ENCODE measurements at regions of chr20 and their contacts with region 1.

Region 1: DNA sequence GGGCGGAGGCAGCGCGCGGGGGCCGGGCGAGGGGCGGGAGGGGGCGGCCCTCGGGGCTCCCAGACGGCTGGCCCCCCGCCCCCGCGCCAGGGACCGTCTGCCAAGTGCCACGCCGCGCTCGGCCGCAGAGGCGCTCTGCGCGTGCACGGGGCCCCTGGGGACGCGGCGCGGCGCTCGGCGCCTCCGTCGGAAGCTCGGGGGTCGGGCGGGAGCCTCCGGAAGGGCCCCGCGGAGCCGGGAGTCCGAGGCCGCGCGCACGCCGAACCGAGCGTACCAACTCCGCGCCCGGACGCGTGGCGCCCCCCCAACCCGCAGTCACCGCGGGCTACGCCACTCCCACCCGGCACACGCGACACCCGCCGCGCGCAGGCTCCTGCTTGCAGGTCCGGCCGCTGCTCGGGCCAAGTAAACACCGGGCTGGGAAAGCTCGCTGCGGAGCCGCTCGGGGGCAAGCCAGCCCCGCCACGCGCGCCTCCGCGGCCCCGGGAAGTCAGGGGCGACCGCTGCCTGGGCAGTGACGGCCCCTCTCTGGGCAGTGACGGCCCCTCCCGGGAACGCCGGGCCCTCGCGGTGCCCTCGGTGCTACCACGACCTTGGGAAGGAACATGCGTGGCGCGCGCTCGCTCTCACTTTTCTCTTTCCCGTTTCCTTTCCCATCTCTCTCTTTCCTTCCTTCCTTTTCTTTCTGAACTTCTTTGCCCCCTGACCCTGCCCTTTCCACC is 384 bp upstream of the PREX1 start:
- DNase-seq: peak; percentile 81
- H3K4me3 ChIP-seq: peak overlapping the region; percentile 14 to 92 (median 26)
- H3K27ac ChIP-seq: peak overlapping the region; percentile 47
- H3K4me1 ChIP-seq: peaks cover 45% of the 10 kb centered on the region
- H3K27me3 ChIP-seq: no peaks in the 10 kb centered on the region
- CTCF ChIP-seq: no peak
- POLR2A ChIP-seq: peak; percentile 83

Region 2: DNA sequence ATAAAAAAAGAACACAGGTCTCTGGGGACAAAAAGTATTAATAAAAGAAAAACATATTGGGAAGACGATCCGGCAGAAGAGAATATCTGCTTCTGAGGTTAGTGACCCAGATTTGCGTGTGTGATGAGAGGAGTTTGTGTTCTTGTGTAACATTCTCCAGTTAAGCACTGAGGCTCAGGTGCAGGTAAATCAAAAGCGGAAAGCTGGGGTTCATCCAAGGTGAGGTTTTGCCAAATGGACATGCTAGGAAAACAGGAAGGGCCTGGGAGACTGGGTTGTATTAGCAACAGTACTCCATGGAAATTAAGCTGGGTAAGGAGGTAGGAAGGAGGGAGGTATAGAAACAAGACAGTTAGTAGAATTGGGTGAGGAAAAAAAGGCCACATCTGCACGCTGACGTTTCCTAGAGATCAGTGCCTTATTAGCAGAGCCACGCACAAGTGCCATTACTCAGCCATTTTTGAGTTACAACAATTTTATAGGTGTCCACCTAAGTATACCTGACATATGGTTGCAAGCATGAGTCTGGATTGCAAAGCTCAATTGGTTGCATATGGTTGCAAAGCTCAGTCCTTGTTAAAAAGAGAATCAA is 1611.3 kb before region 1 on chr20:
- CTCF ChIA-PET with region 1: no interaction called
- POLR2A ChIA-PET with region 1: no interaction called
- dilution Hi-C with region 1: no loop called
- intact Hi-C with region 1: no loop called
- DNase-seq: no peak
- H3K4me3 ChIP-seq: no peak overlapping the region
- H3K27ac ChIP-seq: no peak overlapping the region
- H3K4me1 ChIP-seq: no peaks in the 10 kb centered on the region
- H3K27me3 ChIP-seq: no peaks in the 10 kb centered on the region
- CTCF ChIP-seq: no peak
- POLR2A ChIP-seq: no peak

Region 3: GRCh38 chr20:48682529-48683251 is 145.5 kb before region 1 on chr20:
- CTCF ChIA-PET with region 1: no interaction called
- POLR2A ChIA-PET with region 1: no interaction called
- dilution Hi-C with region 1: no loop called
- intact Hi-C with region 1: loop called (anchors 5 kb)
- DNase-seq: peak; percentile 89
- H3K4me3 ChIP-seq: no peak overlapping the region
- H3K27ac ChIP-seq: peak overlapping the region; percentile 48
- H3K4me1 ChIP-seq: peaks cover 56% of the 10 kb centered on the region
- H3K27me3 ChIP-seq: no peaks in the 10 kb centered on the region
- CTCF ChIP-seq: no peak
- POLR2A ChIP-seq: no peak

Region 4: GRCh38 chr20:48750947-48751635 is 77.1 kb before region 1 on chr20:
- CTCF ChIA-PET with region 1: interaction called, 3 read pairs
- POLR2A ChIA-PET with region 1: interaction called, 3 read pairs
- dilution Hi-C with region 1: no loop called
- intact Hi-C with region 1: loop called (anchors 2 kb)
- DNase-seq: peak; percentile 84
- H3K4me3 ChIP-seq: no peak overlapping the region
- H3K27ac ChIP-seq: peak overlapping the region; percentile 83
- H3K4me1 ChIP-seq: peaks cover 19% of the 10 kb centered on the region
- H3K27me3 ChIP-seq: no peaks in the 10 kb centered on the region
- CTCF ChIP-seq: no peak
- POLR2A ChIP-seq: no peak

Region 5: DNA sequence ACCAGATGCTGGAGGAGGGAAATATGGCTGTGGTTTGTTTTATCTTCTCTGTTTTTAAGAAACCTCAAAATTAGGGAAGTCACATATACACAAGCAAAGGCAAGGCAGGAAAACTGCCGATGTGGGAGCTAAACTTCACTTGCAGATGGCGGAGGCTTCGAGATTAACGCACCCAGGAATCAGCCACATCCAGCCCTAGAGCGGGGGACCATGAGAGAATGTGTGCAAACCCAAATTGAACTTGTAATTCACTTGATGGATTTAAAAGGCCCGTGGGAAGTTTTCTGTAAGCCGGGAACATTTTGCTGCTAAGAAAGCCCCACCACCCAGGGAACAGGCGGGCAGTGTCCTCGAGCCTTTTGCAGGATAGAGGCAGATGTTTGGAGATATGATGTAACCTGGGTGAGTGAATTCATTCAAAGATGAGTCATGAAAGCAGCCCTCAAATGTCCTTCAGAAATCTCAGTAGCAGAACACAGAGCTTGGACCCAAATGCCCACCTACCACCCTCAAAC is 40.3 kb before region 1 on chr20:
- CTCF ChIA-PET with region 1: no interaction called
- POLR2A ChIA-PET with region 1: no interaction called
- dilution Hi-C with region 1: no loop called
- intact Hi-C with region 1: no loop called
- DNase-seq: no peak
- H3K4me3 ChIP-seq: no peak overlapping the region
- H3K27ac ChIP-seq: no peak overlapping the region
- H3K4me1 ChIP-seq: peaks cover 18% of the 10 kb centered on the region
- H3K27me3 ChIP-seq: no peaks in the 10 kb centered on the region
- CTCF ChIP-seq: no peak
- POLR2A ChIP-seq: no peak

Region 6: DNA sequence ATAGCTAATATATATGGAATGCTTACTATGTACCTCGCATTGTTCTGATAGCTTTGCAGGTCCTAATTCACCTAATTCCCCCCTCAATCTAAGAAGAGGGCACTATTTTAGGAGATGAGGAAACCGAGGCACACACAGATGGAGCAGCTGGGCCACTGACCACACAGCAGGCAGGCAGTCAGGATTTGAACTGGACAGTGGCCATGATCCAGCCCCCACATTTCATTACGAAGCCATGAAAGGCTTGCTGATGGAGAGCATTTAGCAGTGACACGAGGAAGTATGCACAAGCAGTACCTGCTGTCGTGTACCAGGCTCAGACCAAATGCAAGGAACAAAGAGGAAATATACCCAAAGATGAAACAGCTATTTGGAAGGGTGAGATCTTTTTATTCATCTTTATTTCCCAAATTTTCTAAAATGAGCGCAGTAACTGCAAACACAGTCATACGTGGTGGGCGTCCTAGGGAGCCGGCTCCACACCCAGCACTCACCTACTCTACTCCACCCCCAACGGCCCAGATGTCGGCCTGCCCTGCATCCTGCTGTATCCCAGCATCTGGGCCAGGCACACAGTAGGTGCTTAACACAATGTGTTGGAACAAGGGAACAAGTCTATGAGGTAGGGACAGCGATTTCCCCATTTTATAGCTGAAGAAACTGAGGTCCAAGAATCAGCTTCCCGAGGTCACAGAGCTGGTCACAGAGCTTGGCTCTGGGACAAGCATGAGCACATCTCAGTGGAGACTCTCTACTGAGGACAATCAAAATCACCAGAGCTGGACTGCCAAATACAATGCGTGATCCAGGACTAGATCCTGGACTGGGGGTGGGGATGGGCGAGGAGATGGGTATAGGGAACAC is 15.4 kb before region 1 on chr20:
- CTCF ChIA-PET with region 1: no interaction called
- POLR2A ChIA-PET with region 1: no interaction called
- dilution Hi-C with region 1: no loop called
- intact Hi-C with region 1: no loop called
- DNase-seq: no peak
- H3K4me3 ChIP-seq: no peak overlapping the region
- H3K27ac ChIP-seq: no peak overlapping the region
- H3K4me1 ChIP-seq: peaks cover 16% of the 10 kb centered on the region
- H3K27me3 ChIP-seq: no peaks in the 10 kb centered on the region
- CTCF ChIP-seq: no peak
- POLR2A ChIP-seq: no peak

Region 7: GRCh38 chr20:48846498-48847485 is 18.6 kb after region 1 on chr20:
- CTCF ChIA-PET with region 1: interaction called, 12 read pairs
- POLR2A ChIA-PET with region 1: interaction called, 5 read pairs
- dilution Hi-C with region 1: no loop called
- intact Hi-C with region 1: loop called (anchors 1 kb)
- DNase-seq: peak; percentile 62
- H3K4me3 ChIP-seq: no peak overlapping the region
- H3K27ac ChIP-seq: peak overlapping the region; percentile 51
- H3K4me1 ChIP-seq: peaks cover 40% of the 10 kb centered on the region
- H3K27me3 ChIP-seq: no peaks in the 10 kb centered on the region
- CTCF ChIP-seq: no peak
- POLR2A ChIP-seq: no peak

Measured in endothelial cell of umbilical vein (primary cell).